Activated T-helper 1 cell treated with anti-CD3 and anti-CD28 coated beads, Interleukin-12 subunit alpha, Interleukin-12 subunit beta, Interleukin-2, Interleukin-4 antibody, amounts not matched to agents 30 ng/mL and 10 ng/mL and 1 ng/mL, durations not matched to agents 14 hours and 24 hours and 36 hours (primary cell): ENCODE measurements at regions of chr3 and their contacts with region 1.

Region 1: GRCh38 chr3:184636741-184637316 is 75.0 kb downstream of the MAGEF1 start:
- DNase-seq: peak; percentile 11
- H3K4me3 Mint-ChIP-seq: no peak overlapping the region
- H3K27ac Mint-ChIP-seq: no peak overlapping the region
- H3K4me1 Mint-ChIP-seq: no peaks in the 10 kb centered on the region
- H3K27me3 Mint-ChIP-seq: peaks cover 4% of the 10 kb centered on the region

Region 2: GRCh38 chr3:184275961-184276910 is 360.6 kb before region 1 on chr3 and contains the start of gene ECE2:
- intact Hi-C with region 1: no loop called
- DNase-seq: no peak
- H3K4me3 Mint-ChIP-seq: no peak within 1 kb of the TSS
- H3K27ac Mint-ChIP-seq: no peak within 1 kb of the TSS
- H3K4me1 Mint-ChIP-seq: no peaks in the 10 kb centered on the region
- H3K27me3 Mint-ChIP-seq: peaks cover 42% of the 10 kb centered on the region
- total RNA-seq, gene ECE2: not detected in 2 replicates

Region 3: DNA sequence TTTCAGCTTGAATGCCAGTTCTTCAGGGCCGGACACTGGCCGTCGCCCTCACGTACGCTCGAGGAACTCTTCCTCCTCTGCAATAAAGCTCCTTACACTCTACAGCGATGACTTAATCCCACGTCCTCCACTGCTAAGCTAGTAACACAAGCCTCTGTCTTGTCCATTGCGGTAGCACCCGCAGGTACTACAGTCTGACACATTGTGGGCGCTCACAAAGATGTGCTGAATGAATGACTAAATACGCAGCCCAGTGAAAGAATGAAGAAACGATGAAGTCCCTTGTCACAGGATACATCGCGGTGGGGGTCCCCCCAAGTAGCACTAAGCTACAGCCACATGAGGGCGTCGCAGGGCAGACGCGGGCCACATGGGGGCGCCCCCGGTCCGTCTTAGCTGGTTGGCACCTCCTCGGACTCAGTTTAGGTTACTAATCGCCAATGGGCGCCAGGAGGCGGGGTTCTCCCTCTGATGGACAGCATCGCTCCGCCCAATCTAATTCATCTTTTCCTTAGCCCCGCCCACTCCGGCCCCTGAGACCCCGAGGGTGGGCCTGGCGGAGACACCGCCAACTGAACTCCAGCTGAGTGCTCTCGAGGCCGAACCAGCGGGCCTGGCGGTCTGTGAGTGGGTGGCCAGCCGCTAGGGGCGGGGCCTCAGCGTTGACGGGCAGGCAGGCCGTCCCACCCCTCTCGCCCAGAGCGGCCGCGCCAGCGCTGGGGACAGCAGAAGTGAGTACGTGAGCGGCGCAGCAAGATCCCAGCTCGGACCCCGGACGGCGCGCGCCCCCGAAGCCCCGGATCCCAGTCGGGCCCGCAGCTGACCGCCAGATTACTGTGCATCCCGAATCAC is 75.5 kb before region 1 on chr3 and contains the start of gene EPHB3:
- intact Hi-C with region 1: loop called (anchors 1 kb)
- DNase-seq: peak; percentile 79
- H3K4me3 Mint-ChIP-seq: peak within 1 kb of the TSS; percentile 73
- H3K27ac Mint-ChIP-seq: no peak within 1 kb of the TSS
- H3K4me1 Mint-ChIP-seq: peaks cover 18% of the 10 kb centered on the region
- H3K27me3 Mint-ChIP-seq: peaks cover 54% of the 10 kb centered on the region
- total RNA-seq, gene EPHB3: 0.31 TPM in 1 of 2 replicates, not detected in the other

Region 4: GRCh38 chr3:184608209-184608608 is 28.6 kb before region 1 on chr3:
- intact Hi-C with region 1: loop called (anchors 2 kb)
- DNase-seq: no peak
- H3K4me3 Mint-ChIP-seq: no peak overlapping the region
- H3K27ac Mint-ChIP-seq: no peak overlapping the region
- H3K4me1 Mint-ChIP-seq: peaks cover 5% of the 10 kb centered on the region
- H3K27me3 Mint-ChIP-seq: peaks cover 35% of the 10 kb centered on the region

Region 5: DNA sequence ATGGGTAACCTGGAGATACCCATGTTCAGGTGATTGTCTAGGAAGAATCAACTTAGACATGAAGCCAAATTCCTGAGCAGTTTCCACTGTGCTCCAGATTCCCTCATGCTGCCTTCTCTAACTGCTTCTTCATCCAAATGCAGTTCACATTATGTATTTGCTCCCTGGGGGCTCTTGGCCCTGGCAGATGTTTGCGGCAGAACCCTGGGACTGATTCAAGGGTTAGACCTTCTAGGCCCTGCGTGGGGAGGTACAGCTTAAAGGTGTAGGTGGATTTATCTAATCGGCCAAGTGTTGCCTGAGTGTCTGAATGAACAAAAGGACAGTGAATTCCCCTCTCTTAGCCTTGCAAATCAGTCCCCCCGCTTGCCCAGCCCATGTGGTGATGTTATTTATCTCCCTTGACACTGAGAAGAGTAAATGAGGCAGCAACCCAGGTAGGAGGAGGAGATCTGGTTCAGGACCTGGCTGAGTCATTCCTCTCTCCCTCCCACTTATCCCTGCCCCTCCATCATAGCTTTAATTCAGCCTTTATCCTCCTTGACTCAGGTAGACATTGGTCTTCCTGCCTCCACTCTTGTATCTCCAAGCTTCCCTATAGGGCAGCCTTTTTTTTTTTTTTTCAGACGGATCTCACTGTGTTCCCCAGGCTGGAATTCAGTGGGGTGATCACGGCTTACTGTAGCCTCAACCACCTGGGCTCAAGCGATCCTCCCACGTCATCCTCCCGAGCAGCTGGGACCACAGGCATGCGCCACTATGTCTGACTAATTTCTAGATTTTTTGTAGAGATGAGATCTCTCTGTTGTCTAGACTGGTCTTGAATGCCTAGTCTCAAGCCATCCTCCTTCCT is 20.2 kb after region 1 on chr3:
- intact Hi-C with region 1: loop called (anchors 1 kb)
- DNase-seq: peak; percentile 2
- H3K4me3 Mint-ChIP-seq: peak overlapping the region; percentile 17
- H3K27ac Mint-ChIP-seq: peak overlapping the region; percentile 67
- H3K4me1 Mint-ChIP-seq: peaks cover 16% of the 10 kb centered on the region
- H3K27me3 Mint-ChIP-seq: no peaks in the 10 kb centered on the region

Region 6: DNA sequence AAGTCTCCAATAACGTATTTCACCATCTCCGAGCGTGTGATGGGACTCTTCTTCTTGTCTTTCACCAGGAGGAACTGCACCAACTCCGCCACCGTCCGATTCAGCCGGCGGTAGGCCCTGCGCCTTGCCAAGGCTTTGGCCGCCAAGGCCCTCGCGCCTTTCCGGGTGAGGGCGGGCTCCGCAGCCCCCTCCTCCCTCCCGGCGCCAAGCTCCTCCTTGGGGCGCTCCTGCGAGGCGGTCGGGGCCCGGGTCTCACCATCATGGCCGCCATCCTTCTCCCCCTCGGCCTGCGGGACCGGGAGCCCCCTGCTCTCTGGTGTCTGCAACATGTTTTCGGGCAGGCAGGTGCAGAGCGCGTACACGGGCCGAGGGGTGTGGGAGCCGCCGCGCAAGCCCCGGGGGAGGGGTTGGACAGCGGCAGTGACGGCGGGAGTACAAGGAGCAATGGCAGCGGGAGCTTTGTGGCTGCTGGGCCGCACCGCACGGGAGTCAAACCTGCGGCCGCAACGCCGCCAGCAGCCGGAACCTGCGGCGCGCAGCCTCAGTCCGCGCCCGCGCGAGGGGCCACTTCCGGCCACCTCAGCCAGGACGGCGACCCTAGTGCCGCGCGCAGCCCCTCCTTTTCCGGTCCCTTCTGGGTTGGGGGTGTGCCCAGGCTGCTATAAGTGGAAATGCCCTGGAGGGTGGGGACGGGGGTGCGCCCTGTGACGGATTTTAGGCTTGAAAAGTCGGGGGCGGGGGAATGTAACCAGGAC is 74.8 kb after region 1 on chr3 and contains the start of gene MAGEF1:
- intact Hi-C with region 1: loop called (anchors 1 kb)
- DNase-seq: peak; percentile 74
- H3K4me3 Mint-ChIP-seq: peak within 1 kb of the TSS; percentile 94
- H3K27ac Mint-ChIP-seq: peak within 1 kb of the TSS; percentile 77
- H3K4me1 Mint-ChIP-seq: peaks cover 37% of the 10 kb centered on the region
- H3K27me3 Mint-ChIP-seq: peaks cover 20% of the 10 kb centered on the region
- total RNA-seq, gene MAGEF1: 16.0 and 17.3 TPM in 2 replicates

Region 7: DNA sequence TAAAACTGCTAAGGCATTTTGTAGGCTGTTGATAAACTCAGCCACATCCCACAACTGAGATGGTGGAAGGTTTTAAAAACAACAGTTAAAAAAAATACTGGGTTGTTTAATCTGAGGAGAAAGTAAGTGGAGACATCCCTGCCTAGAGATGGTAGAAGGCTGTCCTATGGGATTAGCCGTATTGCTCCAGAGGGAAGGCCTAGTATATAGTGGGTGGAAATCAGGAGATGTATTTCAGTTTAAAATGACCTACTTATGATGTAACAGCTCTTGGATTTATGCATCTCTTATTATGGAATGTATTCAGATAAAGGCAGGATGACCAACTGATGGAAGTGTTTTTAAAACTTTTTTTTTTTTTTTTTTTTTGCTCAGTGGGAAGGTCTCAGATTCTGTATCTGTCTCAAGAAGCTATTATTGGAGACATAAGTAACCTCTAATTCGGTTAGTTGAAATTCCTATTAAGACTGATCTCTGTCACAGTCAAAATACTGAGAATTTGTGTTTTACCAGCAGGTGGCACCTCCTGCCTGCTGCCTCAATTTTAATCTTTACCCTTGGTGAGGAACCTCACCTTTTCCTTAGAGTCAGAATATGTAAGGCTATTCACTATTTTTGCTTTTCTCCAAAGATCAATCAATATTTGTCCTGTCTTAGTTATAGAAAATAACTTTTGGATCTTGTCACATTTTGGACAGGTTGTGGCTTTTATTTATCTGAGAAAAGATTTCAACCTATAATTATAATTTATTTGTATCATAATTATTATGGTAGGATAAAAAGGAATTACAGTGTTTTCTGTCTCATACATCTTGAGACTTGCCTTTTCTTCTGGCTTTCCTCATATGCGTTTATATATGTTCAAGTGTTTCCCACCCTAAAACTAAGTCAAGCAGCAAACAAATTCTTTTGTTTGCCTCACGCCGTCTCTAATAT is 238.1 kb after region 1 on chr3:
- intact Hi-C with region 1: loop called (anchors 1 kb)
- DNase-seq: no peak
- H3K4me3 Mint-ChIP-seq: no peak overlapping the region
- H3K27ac Mint-ChIP-seq: no peak overlapping the region
- H3K4me1 Mint-ChIP-seq: peaks cover 21% of the 10 kb centered on the region
- H3K27me3 Mint-ChIP-seq: no peaks in the 10 kb centered on the region